ENCODE measurements at regions of chr6 and their contacts with region 1.

Region 1: GRCh38 chr6:113858480-113859348 is 1.6 kb downstream of the MARCKS start:
- DNase-seq: peak; percentile 98
- ATAC-seq: peak; percentile 76
- H3K4me3 ChIP-seq: peak overlapping the region; percentile 83 to 100 (median 99)
- H3K4me3 Mint-ChIP-seq: peak overlapping the region; percentile 80
- H3K27ac ChIP-seq: peak overlapping the region; percentile 96 to 97
- H3K27ac Mint-ChIP-seq: peak overlapping the region; percentile 85
- H3K4me1 ChIP-seq: peaks cover 18 to 40% of the 10 kb centered on the region in 2 donors
- H3K4me1 Mint-ChIP-seq: peaks cover 22% of the 10 kb centered on the region
- H3K27me3 ChIP-seq: no peaks in the 10 kb centered on the region
- H3K27me3 Mint-ChIP-seq: no peaks in the 10 kb centered on the region
- CTCF ChIP-seq: peak; percentile 94

Region 2: DNA sequence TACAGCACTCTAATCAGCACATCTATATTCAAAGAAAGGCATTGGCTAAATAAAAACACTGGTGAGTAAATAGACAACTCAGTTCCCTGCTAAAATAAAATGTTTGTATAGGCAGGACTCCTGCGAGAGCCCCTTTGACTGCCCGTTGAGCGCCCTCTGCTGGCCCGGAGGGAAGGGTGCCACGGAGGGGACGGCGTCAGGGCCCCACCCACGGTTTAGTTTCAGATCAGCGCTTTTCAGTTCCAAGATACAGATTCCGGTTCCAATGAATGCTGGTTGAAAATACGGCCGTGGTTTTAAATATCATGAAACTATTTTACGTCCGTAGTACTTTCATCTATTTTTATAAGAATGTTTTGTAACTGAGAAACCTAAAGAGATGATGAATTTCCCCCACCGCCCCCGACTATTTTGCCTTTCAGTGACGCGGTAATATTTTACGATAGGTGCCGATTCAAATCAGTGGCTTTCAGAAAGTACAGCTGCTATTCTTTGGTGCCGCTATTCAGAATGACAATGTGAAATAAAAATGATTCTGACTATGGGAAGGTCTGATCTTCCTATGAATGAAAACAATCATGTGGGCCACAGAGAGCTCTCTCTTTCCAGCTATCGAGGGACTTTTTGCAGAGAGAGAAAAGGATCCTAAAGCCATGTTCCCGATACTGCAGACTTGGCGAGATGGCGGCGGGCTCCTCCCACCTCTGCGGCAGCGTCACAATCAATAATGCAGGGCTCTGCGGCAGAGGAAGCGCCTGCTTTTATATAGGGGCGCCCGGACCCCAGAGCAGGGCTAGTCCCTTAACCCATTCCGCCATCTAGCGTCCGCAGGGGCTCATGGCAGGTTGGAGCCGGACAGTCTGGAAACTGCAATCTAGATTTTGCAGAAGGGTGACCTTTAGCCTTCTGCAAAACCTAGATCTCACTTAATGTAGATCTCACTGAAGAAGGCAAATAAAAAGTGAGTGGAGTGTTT is 1815.4 kb before region 1 on chr6:
- CTCF ChIA-PET with region 1: no interaction called
- POLR2A ChIA-PET with region 1: no interaction called
- intact Hi-C with region 1: loop called (anchors 2 kb)
- DNase-seq: peak; percentile 91
- ATAC-seq: peak; percentile 93
- H3K4me3 ChIP-seq: peak overlapping the region; percentile 69 to 99 (median 71)
- H3K4me3 Mint-ChIP-seq: peak overlapping the region; percentile 99
- H3K27ac ChIP-seq: peak overlapping the region; percentile 93 to 94
- H3K27ac Mint-ChIP-seq: peak overlapping the region; percentile 99
- H3K4me1 ChIP-seq: peaks cover 0 to 3% of the 10 kb centered on the region in 2 donors
- H3K4me1 Mint-ChIP-seq: peaks cover 4% of the 10 kb centered on the region
- H3K27me3 ChIP-seq: no peaks in the 10 kb centered on the region
- H3K27me3 Mint-ChIP-seq: peaks cover 5% of the 10 kb centered on the region
- CTCF ChIP-seq: peak; percentile 89

Region 3: DNA sequence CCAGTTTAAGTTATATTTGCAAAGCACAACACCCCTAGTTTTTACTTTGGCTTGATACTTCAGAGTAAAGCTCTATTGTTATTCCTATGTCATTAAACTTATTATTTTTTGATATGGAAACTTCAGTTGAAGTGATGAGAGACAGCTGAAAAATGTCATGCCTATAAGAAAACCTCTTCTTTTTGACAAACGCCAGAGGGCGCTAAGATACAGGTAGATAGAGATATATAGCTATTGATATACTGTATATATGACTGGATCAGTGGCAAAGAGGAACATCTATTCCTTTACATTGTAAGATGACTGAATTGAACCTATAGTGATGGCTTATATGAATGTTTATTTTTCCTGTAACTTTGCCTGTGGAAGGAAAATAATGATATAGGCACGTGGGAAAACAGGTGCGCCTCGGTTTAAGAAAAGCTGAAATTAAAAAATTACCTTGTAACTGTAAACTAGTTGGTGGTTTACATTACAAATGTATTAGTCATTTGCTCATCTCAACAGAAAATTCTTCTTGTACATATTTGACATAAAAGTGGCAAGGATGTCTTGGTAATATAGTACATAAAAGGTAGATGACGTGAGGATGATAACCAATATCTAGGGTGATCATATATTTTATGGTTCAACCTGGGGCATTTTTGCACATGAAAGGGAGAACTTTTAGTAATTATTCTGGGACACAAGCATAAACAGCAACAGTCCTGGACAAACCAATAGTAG is 1678.5 kb before region 1 on chr6:
- CTCF ChIA-PET with region 1: interaction called, 34 read pairs
- POLR2A ChIA-PET with region 1: no interaction called
- intact Hi-C with region 1: no loop called
- DNase-seq: peak; percentile 80
- ATAC-seq: peak; percentile 57
- H3K4me3 ChIP-seq: no peak overlapping the region
- H3K4me3 Mint-ChIP-seq: no peak overlapping the region
- H3K27ac ChIP-seq: no peak overlapping the region
- H3K27ac Mint-ChIP-seq: no peak overlapping the region
- H3K4me1 ChIP-seq: no peaks in the 10 kb centered on the region
- H3K4me1 Mint-ChIP-seq: no peaks in the 10 kb centered on the region
- H3K27me3 ChIP-seq: peaks cover 0 to 3% (median 1%) of the 10 kb centered on the region in 4 experiments
- H3K27me3 Mint-ChIP-seq: peaks cover 32% of the 10 kb centered on the region
- CTCF ChIP-seq: peak; percentile 88

Region 4: GRCh38 chr6:113306552-113307145 is 552.1 kb before region 1 on chr6:
- CTCF ChIA-PET with region 1: interaction called, 109 read pairs
- POLR2A ChIA-PET with region 1: interaction called, 4 read pairs
- intact Hi-C with region 1: loop called (anchors 1 kb)
- DNase-seq: peak; percentile 71
- ATAC-seq: peak; percentile 99
- H3K4me3 ChIP-seq: no peak overlapping the region
- H3K4me3 Mint-ChIP-seq: no peak overlapping the region
- H3K27ac ChIP-seq: no peak overlapping the region
- H3K27ac Mint-ChIP-seq: no peak overlapping the region
- H3K4me1 ChIP-seq: peaks cover 0 to 5% of the 10 kb centered on the region in 2 donors
- H3K4me1 Mint-ChIP-seq: peaks cover 8% of the 10 kb centered on the region
- H3K27me3 ChIP-seq: no peaks in the 10 kb centered on the region
- H3K27me3 Mint-ChIP-seq: no peaks in the 10 kb centered on the region
- CTCF ChIP-seq: peak; percentile 81

Region 5: GRCh38 chr6:113317881-113318574 is 540.7 kb before region 1 on chr6:
- CTCF ChIA-PET with region 1: no interaction called
- POLR2A ChIA-PET with region 1: no interaction called
- intact Hi-C with region 1: no loop called
- DNase-seq: no peak
- ATAC-seq: no peak
- H3K4me3 ChIP-seq: no peak overlapping the region
- H3K4me3 Mint-ChIP-seq: no peak overlapping the region
- H3K27ac ChIP-seq: no peak overlapping the region
- H3K27ac Mint-ChIP-seq: no peak overlapping the region
- H3K4me1 ChIP-seq: no peaks in the 10 kb centered on the region
- H3K4me1 Mint-ChIP-seq: no peaks in the 10 kb centered on the region
- H3K27me3 ChIP-seq: no peaks in the 10 kb centered on the region
- H3K27me3 Mint-ChIP-seq: no peaks in the 10 kb centered on the region
- CTCF ChIP-seq: no peak

Region 6: GRCh38 chr6:113755449-113756289 is 103.0 kb before region 1 on chr6:
- CTCF ChIA-PET with region 1: no interaction called
- POLR2A ChIA-PET with region 1: no interaction called
- intact Hi-C with region 1: loop called (anchors 5 kb)
- DNase-seq: peak; percentile 27
- ATAC-seq: peak; percentile 64
- H3K4me3 ChIP-seq: no peak overlapping the region
- H3K4me3 Mint-ChIP-seq: peak overlapping the region; percentile 64
- H3K27ac ChIP-seq: no peak overlapping the region
- H3K27ac Mint-ChIP-seq: peak overlapping the region; percentile 71
- H3K4me1 ChIP-seq: peaks cover 15 to 17% of the 10 kb centered on the region in 2 donors
- H3K4me1 Mint-ChIP-seq: peaks cover 45% of the 10 kb centered on the region
- H3K27me3 ChIP-seq: no peaks in the 10 kb centered on the region
- H3K27me3 Mint-ChIP-seq: no peaks in the 10 kb centered on the region
- CTCF ChIP-seq: no peak

Region 7: GRCh38 chr6:113879186-113880096 is 20.7 kb after region 1 on chr6:
- CTCF ChIA-PET with region 1: interaction called, 45 read pairs
- POLR2A ChIA-PET with region 1: no interaction called
- intact Hi-C with region 1: loop called (anchors 1 kb)
- DNase-seq: peak; percentile 74
- ATAC-seq: peak; percentile 100
- H3K4me3 ChIP-seq: no peak overlapping the region
- H3K4me3 Mint-ChIP-seq: no peak overlapping the region
- H3K27ac ChIP-seq: no peak overlapping the region
- H3K27ac Mint-ChIP-seq: no peak overlapping the region
- H3K4me1 ChIP-seq: no peaks in the 10 kb centered on the region
- H3K4me1 Mint-ChIP-seq: peaks cover 3% of the 10 kb centered on the region
- H3K27me3 ChIP-seq: no peaks in the 10 kb centered on the region
- H3K27me3 Mint-ChIP-seq: no peaks in the 10 kb centered on the region
- CTCF ChIP-seq: peak; percentile 91

Measured in B cell (primary cell).